K562 (cell line): ENCODE measurements at regions of chr20 and their contacts with region 1.

Region 1: DNA sequence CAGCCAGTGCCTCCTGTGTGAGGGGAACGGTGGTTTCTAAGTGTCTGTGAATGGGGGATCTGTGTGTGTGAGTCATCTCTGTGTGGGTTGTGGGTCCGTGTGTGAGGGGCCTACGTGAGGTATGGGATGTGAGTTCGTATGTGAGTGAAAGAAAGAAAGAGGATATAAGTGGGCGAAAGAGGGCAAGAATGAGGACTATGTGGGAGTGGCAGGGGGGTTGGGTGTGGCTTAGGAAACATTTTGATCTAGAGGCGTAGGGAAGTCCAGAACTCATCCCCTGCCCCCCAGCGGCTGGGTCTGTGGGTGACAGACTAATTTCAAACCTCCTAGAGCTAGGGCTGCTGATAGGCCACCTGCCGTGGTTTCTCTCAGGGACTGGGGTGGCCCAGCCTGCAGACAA is 35.5 kb downstream of the DHX35 start:
- DNase-seq: peak; percentile 62 to 86 (median 71)
- ATAC-seq: peak; percentile 96
- H3K4me3 ChIP-seq: no peak overlapping the region
- H3K27ac ChIP-seq: peak overlapping the region; percentile 21; the same call in 1 of the 3 replicates
- H3K4me1 ChIP-seq: peaks cover 17 to 29% of the 10 kb centered on the region in 2 experiments; a peak in 4 of 5 replicates
- H3K27me3 ChIP-seq: no peaks in the 10 kb centered on the region
- CTCF ChIP-seq: peak; percentile 62 to 71 (median 66)
- EP300 ChIP-seq: no peak
- POLR2A ChIP-seq: no peak
- RAD21 ChIP-seq: peak; percentile 10 to 66; a peak in 3 of 4 replicates

Region 2: DNA sequence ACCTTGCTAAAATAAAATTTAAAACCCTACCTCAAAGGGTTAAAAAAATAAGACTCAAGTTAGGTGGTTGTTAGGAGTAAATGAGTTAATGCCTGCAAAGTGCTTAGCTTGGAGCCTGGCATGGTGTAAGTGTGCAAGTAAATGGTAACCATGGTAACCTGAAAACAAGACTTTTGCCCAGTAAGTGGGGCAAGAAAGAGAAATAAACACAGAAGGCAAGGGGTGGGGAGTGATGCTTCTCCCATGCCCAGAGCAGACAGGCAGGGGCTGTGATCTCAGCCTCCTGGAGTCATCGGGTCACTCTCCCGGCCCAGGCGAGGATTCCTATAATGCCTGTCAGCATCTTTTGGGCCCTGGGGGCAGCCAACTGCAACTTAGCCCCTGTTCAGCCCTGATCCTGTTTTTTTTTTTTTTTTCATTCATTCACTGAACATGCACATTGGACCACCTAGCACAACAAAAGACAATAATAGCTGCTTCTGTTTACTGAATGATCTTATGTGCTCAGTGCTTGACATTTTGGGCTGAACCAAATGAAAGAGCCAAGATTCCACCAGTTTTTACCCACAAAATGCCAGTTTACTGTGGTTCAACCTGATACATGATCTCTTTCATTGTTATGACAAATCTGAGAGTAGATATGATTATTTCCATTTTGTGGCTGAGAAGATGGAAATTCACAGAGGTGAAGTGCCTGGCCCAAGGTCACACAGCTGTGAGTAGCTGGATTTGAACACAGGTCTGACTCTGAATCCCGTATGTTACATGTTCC is 332.3 kb before region 1 on chr20:
- CTCF ChIA-PET with region 1: no interaction called
- POLR2A ChIA-PET with region 1: no interaction called
- in situ Hi-C with region 1: no loop called
- intact Hi-C with region 1: no loop called
- DNase-seq: peak in 1 of 4 experiments; percentile 19
- ATAC-seq: no peak
- H3K4me3 ChIP-seq: no peak overlapping the region
- H3K27ac ChIP-seq: peak overlapping the region; percentile 79; the same call in 2 of the 3 replicates
- H3K4me1 ChIP-seq: peaks cover 24 to 25% of the 10 kb centered on the region in 2 experiments
- H3K27me3 ChIP-seq: no peaks in the 10 kb centered on the region
- CTCF ChIP-seq: no peak
- EP300 ChIP-seq: no peak
- POLR2A ChIP-seq: no peak
- RAD21 ChIP-seq: no peak

Region 3: DNA sequence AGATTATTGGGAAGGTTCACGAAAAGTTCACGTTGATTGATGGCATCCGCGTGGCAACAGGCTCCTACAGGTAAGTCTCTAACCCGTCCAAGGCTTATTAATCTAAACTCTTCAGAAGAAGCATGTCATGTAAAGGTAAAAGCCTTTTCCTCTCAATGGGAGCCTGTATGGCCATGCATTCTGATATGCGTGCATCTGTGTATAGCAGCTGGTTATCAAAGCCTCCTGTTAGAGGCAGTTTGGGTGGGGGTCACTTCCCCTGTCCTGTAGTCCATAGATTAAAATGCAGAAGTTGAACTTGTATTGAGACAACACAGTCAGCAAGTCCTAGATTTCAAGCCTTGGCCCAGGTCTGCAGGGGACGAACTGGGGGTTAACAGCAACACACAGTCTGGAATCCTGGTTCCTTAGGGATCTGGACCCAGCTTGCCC is 49.7 kb before region 1 on chr20:
- CTCF ChIA-PET with region 1: no interaction called
- POLR2A ChIA-PET with region 1: interaction called, 3 read pairs
- in situ Hi-C with region 1: no loop called
- intact Hi-C with region 1: loop called (anchors 5 kb)
- DNase-seq: peak; percentile 58 to 92 (median 74)
- ATAC-seq: peak; percentile 86
- H3K4me3 ChIP-seq: no peak overlapping the region
- H3K27ac ChIP-seq: peak overlapping the region; percentile 86
- H3K4me1 ChIP-seq: peaks cover 21 to 36% of the 10 kb centered on the region in 2 experiments
- H3K27me3 ChIP-seq: no peaks in the 10 kb centered on the region
- CTCF ChIP-seq: no peak
- EP300 ChIP-seq: peak; percentile 99
- POLR2A ChIP-seq: peak; percentile 36; the same call in 1 of the 2 replicates
- RAD21 ChIP-seq: no peak

Region 4: DNA sequence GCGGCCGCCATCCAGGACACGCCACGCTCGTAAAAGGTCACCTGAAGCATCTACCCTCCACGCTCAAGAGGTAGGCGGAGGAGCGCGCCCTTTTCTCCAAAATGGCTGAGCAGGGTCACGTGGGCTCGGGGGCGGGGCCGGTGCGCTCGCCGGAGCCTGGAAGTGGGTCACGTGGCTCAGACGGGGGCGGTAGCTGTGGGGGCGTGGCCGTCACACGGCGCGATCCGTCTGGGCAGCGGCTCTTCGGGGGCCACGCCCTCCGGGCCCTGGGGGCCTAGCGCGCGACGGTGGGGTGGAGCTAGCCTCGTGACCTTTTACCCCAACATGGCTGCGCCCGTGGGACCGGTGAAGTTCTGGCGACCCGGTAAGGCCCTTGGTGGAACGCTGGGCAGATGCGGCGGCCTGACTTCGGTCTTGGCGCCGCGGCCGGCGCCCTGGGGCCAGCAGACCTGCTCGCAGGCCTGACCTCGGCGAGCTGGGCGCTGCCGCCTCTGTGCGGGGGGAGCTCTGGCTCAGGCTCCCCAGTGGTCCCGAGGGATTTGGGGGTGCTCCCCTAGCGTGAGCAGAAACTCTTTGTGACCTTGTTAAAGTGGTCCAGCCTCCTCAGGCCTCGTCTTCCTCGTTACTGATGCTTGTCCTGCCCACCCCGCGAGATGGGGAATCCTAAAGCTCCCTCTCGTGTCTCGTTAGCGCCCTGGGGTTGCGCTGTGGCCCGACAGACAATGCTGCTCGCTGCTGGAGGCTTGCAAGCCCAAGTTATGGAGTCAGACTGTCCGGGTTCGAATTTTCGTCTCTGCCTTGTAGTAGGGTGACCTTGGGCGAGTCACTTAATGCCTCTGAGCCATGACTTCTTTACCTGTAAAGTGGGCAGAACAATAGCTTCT is 35.3 kb before region 1 on chr20 and contains the start of gene DHX35:
- CTCF ChIA-PET with region 1: no interaction called
- POLR2A ChIA-PET with region 1: interaction called, 7 read pairs
- in situ Hi-C with region 1: no loop called
- intact Hi-C with region 1: loop called (anchors 5 kb)
- DNase-seq: peak; percentile 98 to 99 (median 99)
- ATAC-seq: peak; percentile 97
- H3K4me3 ChIP-seq: peak within 1 kb of the TSS; percentile 92
- H3K27ac ChIP-seq: peak within 1 kb of the TSS; percentile 94
- H3K4me1 ChIP-seq: peaks cover 14 to 18% of the 10 kb centered on the region in 2 experiments; a peak in 4 of 5 replicates
- H3K27me3 ChIP-seq: no peaks in the 10 kb centered on the region
- CTCF ChIP-seq: peak; percentile 65 to 77 (median 71)
- EP300 ChIP-seq: no peak
- POLR2A ChIP-seq: peak; percentile 90
- RAD21 ChIP-seq: peak; percentile 71 to 80
- polyA plus RNA-seq, gene DHX35: 6.5 to 12.0 TPM

Region 5: DNA sequence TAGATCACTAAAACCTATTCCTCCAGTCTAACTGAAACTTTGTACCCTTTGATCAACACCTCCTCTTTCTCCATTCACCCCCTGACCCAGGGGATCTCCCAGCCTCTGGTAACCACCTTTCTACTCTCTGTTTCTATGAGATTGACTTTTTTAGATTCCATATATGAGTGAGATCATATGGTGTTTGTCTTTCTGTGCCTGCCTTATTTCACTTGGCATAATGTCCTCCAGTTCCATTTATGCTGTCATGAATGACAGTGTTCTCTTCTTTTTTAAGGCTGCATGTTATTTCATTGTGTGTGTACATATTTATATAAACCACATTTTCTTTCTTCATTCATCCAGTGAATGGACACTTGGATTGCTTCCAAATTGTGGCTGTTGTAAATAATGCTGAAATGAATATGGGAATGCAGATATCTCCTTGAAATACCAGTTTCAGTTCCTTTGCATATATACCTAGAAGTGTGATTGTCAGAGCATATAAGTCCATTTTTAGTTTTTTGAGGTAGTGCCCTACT is 22.2 kb after region 1 on chr20:
- CTCF ChIA-PET with region 1: no interaction called
- POLR2A ChIA-PET with region 1: no interaction called
- in situ Hi-C with region 1: no loop called
- intact Hi-C with region 1: no loop called
- DNase-seq: no peak
- ATAC-seq: no peak
- H3K4me3 ChIP-seq: no peak overlapping the region
- H3K27ac ChIP-seq: no peak overlapping the region
- H3K4me1 ChIP-seq: no peaks in the 10 kb centered on the region
- H3K27me3 ChIP-seq: no peaks in the 10 kb centered on the region
- CTCF ChIP-seq: no peak
- EP300 ChIP-seq: no peak
- POLR2A ChIP-seq: no peak
- RAD21 ChIP-seq: no peak

Region 6: GRCh38 chr20:39049684-39050554 is 52.3 kb after region 1 on chr20:
- CTCF ChIA-PET with region 1: no interaction called
- POLR2A ChIA-PET with region 1: no interaction called
- in situ Hi-C with region 1: no loop called
- intact Hi-C with region 1: no loop called
- DNase-seq: peak; percentile 80 to 89 (median 87)
- ATAC-seq: peak; percentile 94
- H3K4me3 ChIP-seq: peak overlapping the region; percentile 55
- H3K27ac ChIP-seq: peak overlapping the region; percentile 65
- H3K4me1 ChIP-seq: peaks cover 8 to 16% of the 10 kb centered on the region in 2 experiments
- H3K27me3 ChIP-seq: peaks cover 0 to 6% of the 10 kb centered on the region in 2 experiments; a peak in 3 of 5 replicates
- CTCF ChIP-seq: peak; percentile 96 to 97 (median 96)
- EP300 ChIP-seq: no peak
- POLR2A ChIP-seq: peak; percentile 76
- RAD21 ChIP-seq: peak; percentile 88 to 93

Region 7: GRCh38 chr20:39190666-39191570 is 193.3 kb after region 1 on chr20:
- CTCF ChIA-PET with region 1: no interaction called
- POLR2A ChIA-PET with region 1: no interaction called
- in situ Hi-C with region 1: no loop called
- intact Hi-C with region 1: no loop called
- DNase-seq: no peak
- ATAC-seq: no peak
- H3K4me3 ChIP-seq: no peak overlapping the region
- H3K27ac ChIP-seq: no peak overlapping the region
- H3K4me1 ChIP-seq: no peaks in the 10 kb centered on the region
- H3K27me3 ChIP-seq: no peaks in the 10 kb centered on the region
- CTCF ChIP-seq: no peak
- EP300 ChIP-seq: no peak
- POLR2A ChIP-seq: no peak
- RAD21 ChIP-seq: no peak